AG04449 (cell line): ENCODE measurements at regions of chr19 and their contacts with region 1.

Region 1: DNA sequence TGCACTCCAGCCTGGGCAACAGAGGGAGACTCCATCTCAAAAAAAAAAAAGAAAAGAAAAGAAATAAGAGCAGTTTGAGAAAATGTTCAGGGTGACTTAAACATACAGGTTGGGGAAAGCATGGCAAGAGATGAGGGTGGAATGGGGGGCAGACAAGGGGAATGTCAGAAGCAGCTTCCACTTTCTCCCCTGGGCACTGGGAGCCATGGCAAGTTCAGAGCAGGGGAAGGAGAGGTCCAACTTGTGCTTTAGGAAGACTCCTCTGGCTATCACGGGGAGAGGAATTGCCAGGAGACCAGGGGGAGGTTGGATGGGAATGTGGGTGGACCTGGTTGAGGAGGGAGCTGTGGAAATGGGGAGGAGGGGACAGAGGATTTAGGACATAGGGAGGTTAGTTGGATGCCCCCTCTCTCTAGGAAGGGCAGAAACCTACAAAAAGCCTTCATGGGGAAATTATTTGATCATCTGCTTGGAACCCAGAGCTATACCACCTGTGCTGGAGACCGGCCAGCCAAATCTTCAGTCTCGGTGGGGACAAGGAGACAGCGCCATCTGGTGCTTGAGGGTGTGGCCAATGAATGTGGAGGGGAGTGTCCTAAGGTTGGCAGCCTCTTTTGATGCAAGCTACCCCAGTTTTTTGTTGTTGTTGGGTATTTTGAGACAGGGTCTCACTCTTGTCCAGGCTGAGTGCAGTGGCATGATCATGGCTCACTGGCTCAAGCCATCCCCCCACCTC is 7.3 kb upstream of the STRN4 start:
- DNase-seq: no peak
- H3K4me3 ChIP-seq: no peak overlapping the region
- CTCF ChIP-seq: peak; percentile 42

Region 2: GRCh38 chr19:46741447-46741846 is 12.1 kb before region 1 on chr19:
- CTCF ChIA-PET with region 1: interaction called, 24 read pairs
- POLR2A ChIA-PET with region 1: no interaction called
- DNase-seq: no peak
- H3K4me3 ChIP-seq: no peak overlapping the region
- CTCF ChIP-seq: no peak

Region 3: DNA sequence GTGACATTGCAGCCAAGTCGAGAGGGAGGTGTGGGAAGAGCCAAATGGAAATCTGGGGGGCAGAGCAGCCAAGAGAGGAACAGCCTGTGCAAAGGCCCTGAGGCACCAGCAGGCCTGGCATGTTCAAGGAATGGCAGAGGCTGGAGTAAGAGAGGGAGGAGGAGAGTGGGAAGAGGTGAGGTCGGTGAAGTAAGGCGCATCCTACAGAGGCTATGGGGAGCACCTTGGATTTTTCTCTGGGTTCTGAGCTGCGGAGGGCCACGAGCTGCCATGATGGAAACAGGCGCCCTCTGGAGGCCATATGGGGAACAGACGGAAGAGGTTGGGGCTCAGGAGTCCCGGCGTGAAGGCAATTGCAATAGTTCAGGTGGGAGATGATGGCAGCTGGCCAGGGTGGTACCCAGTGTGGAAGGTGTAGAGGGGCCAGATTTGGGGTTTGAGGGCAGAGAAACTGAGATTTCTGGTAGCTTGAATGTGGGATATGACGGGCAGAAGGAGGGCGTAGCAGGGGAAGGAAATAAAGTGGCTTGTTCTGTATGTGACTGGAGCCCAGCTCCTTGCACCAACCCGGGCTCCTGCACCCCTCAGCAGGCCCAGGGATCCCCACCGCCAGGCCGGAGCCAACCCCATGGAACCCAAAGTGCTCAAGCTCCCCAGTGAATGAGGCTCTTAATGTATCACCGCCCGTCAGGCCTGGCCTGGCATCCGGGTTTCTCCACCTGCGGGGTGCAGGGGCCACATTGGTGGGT is 13.2 kb after region 1 on chr19:
- CTCF ChIA-PET with region 1: interaction called, 24 read pairs
- POLR2A ChIA-PET with region 1: interaction called, 4 read pairs
- DNase-seq: no peak
- H3K4me3 ChIP-seq: no peak overlapping the region
- CTCF ChIP-seq: peak; percentile 75

Region 4: DNA sequence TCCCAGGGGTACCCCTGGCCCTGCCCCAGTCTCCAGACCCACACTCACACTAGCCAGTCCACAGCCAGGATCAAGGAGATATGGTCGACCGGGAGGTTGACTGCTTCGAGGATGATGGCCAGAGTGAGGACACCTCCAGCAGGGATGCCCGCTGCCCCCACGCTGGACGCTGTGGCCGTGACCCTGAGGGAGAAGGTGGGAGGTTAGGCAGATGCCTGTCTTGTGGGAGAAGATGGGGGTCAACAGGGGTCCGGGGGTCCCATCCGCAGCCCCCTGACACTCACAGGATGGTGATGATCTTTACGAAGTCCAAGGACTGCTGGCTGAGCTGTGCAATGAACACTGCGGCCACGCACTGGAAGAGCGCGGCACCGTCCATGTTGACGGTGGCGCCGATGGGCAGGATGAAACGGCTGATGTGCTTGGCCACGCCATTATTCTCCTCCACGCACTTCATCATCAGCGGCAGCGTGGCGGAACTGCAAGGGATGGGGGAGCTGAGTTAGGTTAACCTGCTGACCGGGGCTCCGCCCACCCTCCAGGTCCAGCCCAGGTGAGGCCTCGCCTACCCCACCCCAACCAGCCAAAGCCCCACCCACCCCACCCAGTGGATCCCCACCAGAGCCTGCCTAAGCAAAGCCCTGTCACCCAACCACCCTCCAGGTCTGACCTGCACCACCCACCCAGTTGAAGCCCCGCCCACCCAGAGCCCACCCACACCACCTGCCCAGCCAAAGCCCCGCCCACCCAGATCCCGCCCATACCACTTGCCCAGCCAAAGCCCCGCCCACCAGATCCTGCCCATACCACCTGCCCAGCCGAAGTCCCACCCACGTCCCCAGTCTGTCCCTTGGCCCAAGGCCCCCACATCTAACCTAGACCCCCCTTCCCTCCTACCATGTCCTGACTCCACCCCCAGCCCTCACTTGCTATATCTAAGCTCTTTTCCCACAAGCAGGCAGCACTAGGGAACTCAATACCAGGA is 23.6 kb after region 1 on chr19:
- CTCF ChIA-PET with region 1: interaction called, 24 read pairs
- POLR2A ChIA-PET with region 1: no interaction called
- DNase-seq: no peak
- H3K4me3 ChIP-seq: no peak overlapping the region
- CTCF ChIP-seq: no peak

Region 5: DNA sequence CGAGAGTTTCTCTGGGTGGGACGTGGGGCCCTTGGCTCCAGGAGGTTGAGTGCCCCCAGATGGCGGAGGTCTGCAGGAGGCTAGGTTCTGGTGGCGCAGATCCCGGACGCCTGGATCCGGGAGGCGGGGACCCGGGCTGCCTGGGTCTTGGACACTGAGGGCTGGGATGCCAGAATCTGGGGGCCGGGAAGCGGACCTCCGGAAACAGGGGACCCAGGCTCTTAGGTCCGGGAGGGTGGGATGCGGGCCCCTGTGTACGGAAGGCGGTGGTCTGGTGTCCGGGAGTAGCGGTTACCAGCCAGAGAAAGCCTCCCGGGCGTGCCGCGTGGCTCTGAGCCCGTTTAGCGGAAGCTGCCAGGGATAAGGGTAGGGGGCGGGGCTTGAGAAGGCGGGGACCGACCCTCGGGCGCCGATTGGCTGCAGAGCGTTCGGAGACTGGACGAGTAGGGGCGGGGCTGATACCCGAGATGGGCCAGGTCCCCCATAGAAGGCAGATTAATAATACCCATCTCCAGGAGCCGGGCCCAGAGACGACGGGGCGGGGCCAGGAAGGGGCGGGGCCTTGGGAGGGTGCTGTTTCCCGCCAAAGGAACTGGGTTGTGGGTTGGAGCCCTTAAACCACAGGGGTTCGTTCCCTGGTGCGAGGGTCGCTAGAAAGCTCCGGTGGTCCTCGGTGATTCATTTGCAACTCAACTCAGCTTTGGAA is 34.8 kb after region 1 on chr19 and contains the start of gene SLC1A5:
- CTCF ChIA-PET with region 1: interaction called, 12 read pairs
- POLR2A ChIA-PET with region 1: interaction called, 3 read pairs
- DNase-seq: peak; percentile 79
- H3K4me3 ChIP-seq: peak within 1 kb of the TSS; percentile 95
- CTCF ChIP-seq: no peak

Region 6: DNA sequence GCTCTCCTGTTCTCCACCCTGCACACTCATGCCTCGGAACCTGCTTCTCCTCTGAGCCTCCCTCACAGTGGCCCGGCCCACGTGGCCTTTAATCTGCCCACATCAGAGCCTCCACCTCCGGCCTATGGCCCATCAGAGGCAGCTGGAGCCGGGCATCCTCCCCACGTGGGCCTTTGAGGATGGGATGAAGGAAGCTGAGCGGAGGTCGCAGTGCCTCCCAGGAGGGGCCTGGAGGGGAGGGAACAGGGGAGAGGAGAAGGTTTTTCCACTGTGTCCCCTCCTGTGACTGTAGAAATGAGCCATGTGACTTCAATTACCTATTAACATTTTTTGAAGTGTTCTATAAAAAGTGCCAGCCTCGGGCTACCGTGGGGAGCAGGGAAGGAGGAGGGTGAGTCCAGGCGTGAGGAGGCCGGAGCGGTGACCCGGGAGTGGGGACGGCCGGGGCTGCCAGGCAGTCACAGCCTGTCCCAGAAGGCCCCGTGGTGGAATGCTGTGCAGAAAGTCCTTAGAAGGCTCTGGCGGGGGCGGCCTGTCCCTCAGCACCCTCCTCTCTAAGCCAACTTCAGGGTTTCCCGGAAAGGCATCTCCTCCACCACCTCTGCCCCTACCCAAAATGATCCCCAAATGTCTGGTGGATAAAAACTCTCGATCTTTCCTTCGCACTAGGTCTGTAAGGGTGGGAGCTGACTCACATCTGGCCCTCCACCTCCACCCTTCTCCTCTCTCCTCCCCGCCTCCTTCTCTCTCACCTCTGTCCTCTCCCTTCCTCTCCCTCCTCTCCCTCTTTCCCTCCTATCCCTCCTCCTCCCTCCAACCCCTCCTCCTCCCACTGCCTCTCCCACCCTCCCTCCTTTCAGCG is 59.6 kb after region 1 on chr19:
- CTCF ChIA-PET with region 1: no interaction called
- POLR2A ChIA-PET with region 1: no interaction called
- DNase-seq: no peak
- H3K4me3 ChIP-seq: no peak overlapping the region
- CTCF ChIP-seq: no peak

Region 7: DNA sequence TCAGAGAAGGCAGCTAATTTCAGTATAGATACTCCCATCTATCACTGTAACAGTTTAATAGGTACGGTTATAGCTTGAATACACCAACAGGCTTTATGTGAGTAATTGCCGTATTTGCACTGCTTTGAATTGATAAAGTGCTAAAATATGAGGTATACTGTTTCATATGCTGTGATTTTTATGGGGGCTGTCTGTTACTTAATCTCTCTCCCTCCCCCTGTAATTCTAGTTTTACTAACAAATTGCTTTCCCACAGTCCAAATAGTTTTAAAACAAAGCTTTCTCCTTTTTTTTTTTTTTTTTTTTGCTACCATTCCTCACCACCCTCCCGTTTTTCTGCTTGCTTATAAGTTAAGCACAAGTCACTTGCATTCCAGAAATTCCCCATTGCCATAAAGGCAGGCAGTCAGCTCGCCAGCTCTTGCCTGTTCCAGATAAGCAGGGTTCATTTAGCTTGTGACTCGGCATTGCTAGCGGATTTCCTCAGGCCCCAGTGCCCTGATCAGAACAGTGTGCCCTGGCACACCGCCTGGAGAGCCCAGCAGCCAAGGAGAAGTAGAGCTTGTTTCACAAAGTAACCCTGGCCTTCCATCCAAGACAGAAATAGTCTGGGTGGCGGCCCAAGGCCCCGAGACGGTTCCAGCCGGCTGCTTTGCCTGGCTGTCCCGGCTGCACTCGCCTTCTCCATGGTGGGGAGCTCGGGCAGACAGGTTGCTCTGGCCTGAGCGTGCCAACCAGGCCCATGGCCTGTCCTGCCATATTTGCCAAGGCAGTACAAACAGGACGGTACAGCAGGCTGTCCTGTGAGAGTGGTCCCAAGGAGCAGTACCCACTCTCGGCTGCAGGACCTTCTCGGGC is 222.6 kb after region 1 on chr19:
- CTCF ChIA-PET with region 1: interaction called, 12 read pairs
- POLR2A ChIA-PET with region 1: interaction called, 3 read pairs
- DNase-seq: peak; percentile 96
- H3K4me3 ChIP-seq: no peak overlapping the region
- CTCF ChIP-seq: no peak